GM13976 (cell line): ENCODE measurements at regions of chr1 and their contacts with region 1.

Region 1: DNA sequence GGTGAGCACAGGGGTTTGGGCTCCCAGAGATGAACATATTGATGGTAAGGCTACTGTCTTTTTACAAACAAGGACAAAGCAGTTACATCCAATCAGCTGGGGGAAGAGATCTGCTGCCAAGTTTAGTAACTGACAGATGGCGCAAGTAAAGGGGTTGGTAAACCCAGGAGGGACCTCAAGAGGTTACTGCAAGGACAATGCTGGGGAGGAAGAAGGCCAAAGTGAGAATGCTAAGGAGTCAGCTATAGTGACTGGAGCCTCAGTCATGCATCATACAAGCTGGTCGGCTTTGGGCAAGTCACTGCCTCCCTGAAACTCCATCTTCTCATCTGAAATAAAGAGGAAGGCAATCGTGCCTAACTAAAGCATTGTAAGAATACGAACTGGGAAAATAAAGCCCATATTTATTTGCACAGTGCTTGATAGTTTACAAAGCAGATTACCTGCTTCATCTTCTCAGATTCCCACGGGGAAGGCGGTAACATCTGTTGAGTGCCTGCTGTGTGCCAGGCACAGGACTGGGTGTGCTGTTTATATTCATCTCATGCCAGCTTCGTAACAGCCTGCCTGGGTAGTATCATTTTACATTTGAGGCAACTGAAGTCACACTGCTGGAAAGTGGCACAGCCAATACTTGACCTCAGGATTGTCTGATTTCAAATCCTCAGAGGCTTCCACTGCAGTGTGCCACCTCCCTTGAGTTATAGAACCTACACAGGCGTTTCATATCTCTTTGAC is 114.8 kb downstream of the BEND5 start:
- DNase-seq: no peak
- CTCF ChIP-seq: no peak

Region 2: DNA sequence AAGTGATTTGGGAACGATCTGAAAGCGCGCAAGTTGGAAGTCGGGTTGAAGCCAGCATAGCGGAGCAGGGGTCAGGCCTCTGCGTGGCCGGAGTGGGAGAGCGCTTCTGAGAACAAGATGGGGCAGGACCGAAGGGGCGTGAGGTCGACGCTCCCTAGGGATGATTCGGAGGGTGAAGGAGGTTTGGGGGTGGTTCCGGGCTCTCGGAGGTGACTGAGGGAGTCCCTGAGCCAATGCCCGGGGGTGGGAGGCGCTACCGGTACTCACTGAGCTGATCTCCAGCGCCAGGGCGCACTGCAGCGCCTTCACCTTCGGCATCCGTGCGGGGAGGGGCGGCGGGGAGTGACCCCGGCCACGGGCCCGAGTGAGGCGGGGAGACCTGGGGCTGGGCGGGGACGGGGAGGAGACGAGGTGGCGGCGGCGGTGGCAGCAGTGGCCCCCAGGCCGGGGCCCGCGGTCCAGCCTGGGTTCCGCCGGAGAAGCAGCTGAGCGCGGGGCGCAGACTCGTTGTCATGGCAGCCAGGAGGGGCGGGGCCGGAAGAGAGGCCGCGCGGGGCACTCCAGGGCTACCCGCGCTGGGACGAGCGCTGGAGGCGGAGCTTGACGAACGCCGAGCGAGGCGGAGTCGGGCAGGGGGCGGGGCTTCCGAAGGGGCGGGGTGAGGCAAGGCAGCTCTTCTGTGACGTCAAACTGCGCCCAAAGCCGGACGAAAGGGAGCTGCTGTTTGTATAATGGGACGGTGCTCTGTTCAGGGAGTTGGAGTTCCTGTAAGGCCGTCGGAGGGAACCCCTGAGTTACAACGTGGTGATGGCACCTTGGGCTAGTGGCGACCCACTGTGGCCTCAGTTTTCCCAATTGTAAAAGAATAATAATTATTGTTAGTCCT is 190.0 kb before region 1 on chr1 and contains the start of gene SPATA6:
- in situ Hi-C with region 1: no loop called
- DNase-seq: peak; percentile 97
- CTCF ChIP-seq: no peak

Region 3: DNA sequence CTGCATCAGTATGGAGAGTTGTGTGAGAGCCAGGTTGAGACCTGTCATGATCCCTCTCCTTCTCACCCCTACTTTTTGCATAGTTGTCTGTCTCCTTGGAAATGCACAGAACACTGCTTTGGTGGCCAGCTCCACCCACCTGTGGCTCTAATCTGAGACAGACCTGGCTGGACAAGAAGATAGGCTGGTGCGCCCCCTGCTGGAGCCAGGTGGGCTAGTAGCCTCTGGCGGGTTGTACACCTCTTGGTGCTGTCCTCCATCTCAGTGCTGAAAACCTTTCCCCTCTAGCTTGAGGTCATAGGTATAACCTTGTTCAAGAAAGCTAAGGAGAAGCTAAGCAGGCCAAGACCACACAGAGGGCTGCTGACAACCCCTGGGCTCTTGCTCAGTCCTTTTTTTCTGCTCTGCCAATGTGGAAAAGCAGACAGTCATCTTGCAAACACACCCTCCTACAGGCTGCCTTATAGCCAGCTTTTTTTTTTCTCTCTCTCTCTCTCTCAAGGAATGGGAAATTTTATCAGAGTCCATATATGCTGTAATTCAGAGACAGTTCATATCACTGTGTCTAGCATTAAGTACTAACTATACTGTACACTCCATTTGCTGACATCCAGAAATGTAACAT is 131.1 kb before region 1 on chr1:
- in situ Hi-C with region 1: no loop called
- DNase-seq: peak; percentile 59
- CTCF ChIP-seq: peak; percentile 52

Region 4: DNA sequence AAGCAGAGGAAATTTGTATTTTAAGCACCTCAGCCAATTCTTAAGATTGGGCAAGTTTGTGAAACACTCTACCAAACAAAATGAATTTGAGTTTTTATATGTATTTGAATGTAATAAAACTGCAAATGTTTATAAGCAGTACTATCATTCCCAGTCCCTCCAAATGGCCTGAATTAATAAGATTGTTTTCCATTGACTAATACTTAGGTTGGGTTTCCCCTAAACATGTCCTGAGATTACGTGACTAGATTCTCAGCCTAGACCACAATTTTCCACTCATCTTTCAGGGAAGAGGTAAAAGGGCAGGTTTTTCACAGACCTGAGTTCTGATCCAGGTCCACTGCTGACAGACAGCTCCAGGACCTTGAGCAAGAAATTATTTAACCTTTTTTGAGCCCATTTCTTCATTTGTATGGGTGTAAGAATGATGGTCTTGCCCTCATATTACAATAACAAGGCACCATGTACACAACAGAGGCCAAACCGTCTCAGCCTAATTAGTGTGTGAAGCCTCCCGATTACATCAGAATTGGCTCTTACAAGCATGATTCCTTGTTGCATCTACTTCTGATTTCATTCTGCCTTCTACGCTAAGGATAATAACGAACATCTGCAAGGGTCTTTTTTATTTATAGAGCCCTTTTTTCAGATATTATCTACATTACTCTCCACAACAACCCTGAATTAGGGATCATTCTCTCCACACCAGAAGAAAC is 63.6 kb after region 1 on chr1:
- in situ Hi-C with region 1: loop called (anchors 10 kb)
- DNase-seq: no peak
- CTCF ChIP-seq: no peak